Motor neuron (in vitro differentiated cells): ENCODE measurements at regions of chr1 and their contacts with region 1.

Region 1: DNA sequence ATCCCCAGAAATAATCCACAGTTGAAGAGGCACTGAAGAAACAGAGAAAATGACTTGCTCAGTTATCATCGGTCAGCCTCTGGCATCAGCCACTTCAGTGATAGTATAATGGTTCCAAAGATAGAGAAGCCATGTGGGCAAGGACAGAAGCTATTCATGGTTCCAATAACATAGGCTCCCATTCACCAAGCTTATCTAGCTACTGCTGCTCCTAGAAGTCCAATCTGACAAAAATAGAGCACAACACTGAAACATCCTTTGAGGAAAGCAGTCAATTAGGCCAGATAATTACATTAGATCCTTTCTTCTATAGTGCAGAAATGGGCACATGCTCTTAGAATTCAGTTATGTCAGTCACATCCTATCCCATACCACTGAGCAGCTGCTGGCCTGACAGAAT is 33.5 kb upstream of the CRB1 start:
- ATAC-seq: no peak
- H3K4me3 ChIP-seq: no peak overlapping the region
- H3K27ac ChIP-seq: no peak overlapping the region
- H3K4me1 ChIP-seq: no peaks in the 10 kb centered on the region

Region 2: GRCh38 chr1:197049100-197049499 is 185.5 kb before region 1 on chr1:
- in situ Hi-C with region 1: no loop called
- ATAC-seq: no peak
- H3K4me3 ChIP-seq: no peak overlapping the region
- H3K27ac ChIP-seq: no peak overlapping the region
- H3K4me1 ChIP-seq: no peaks in the 10 kb centered on the region

Region 3: GRCh38 chr1:197356723-197357533 is 122.3 kb after region 1 on chr1:
- in situ Hi-C with region 1: loop called in 1 of 9 experiments (anchors 25 kb)
- ATAC-seq: peak in 6 of 8 experiments; percentile 36 to 81 (median 76)
- H3K4me3 ChIP-seq: no peak overlapping the region
- H3K27ac ChIP-seq: no peak overlapping the region
- H3K4me1 ChIP-seq: peaks cover 3 to 7% of the 10 kb centered on the region in 2 donors